CD4-positive, alpha-beta T cell (primary cell): ENCODE measurements at regions of chr17 and their contacts with region 1.

Region 1: GRCh38 chr17:3723556-3724369 is at the start of gene HASPIN:
- DNase-seq: peak; percentile 86 to 97 (median 90)
- ATAC-seq: peak; percentile 88
- H3K4me3 ChIP-seq: peak within 1 kb of the TSS; percentile 94
- H3K4me3 Mint-ChIP-seq: peak within 1 kb of the TSS; percentile 89
- H3K27ac ChIP-seq: peak within 1 kb of the TSS; percentile 57 to 64
- H3K27ac Mint-ChIP-seq: peak within 1 kb of the TSS; percentile 75
- H3K4me1 ChIP-seq: peaks cover 48% of the 10 kb centered on the region
- H3K4me1 Mint-ChIP-seq: peaks cover 39% of the 10 kb centered on the region
- H3K27me3 ChIP-seq: no peaks in the 10 kb centered on the region
- H3K27me3 Mint-ChIP-seq: no peaks in the 10 kb centered on the region
- CTCF ChIP-seq: no peak
- total RNA-seq, gene HASPIN: 0.22 to 0.25 TPM

Region 2: DNA sequence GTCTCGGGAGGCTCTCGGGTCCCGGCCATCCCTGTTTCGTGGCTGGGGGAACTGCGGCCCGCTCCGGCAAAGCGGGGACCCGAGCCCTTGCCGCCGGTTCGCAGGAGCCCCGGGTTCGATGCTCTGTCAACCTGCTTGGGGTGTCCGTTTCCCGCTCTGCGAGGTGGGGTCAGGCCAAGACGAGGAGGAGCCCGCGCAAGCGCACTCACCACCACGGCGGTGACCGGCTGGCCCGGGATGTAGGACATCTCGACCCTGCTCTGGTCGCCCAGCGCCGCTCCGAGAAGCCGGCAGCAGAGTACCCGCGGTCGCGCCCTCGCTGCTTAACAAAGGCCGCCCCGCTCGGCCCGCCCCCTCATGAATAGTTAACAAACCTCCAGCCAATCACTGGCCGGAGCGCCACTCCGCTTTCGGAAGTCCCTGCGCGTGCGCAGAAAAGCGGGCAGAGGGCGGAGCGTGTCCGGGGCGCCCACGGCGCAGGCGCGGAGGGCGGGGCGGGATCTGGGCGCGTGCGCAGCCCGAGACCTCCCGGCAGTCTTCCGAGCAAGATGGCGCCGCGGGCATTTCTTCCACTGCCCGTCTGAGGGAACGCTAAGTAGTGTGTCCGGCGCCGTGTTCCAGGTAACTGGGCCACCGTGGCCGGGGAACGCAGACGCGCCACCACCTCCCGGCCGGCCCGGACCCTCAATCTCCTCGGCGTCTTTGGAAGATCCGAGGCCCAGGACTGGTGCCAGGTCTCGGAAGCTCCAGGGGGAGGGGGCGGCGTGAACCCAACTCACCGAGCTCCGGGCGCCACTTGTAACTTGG is 55.3 kb before region 1 on chr17 and contains the starts of genes EMC6 and TAX1BP3:
- CTCF ChIA-PET with region 1: no interaction called
- POLR2A ChIA-PET with region 1: interaction called, 3 read pairs
- intact Hi-C with region 1: loop called in 1 of 2 experiments (anchors 2 kb)
- DNase-seq: peak; percentile 96 to 99 (median 99)
- ATAC-seq: peak; percentile 94
- H3K4me3 ChIP-seq: peak within 1 kb of the TSS; percentile 100
- H3K4me3 Mint-ChIP-seq: peak within 1 kb of the TSS; percentile 92
- H3K27ac ChIP-seq: peak within 1 kb of the TSS; percentile 67 to 78
- H3K27ac Mint-ChIP-seq: peak within 1 kb of the TSS; percentile 81
- H3K4me1 ChIP-seq: peaks cover 25% of the 10 kb centered on the region
- H3K4me1 Mint-ChIP-seq: peaks cover 13% of the 10 kb centered on the region
- H3K27me3 ChIP-seq: no peaks in the 10 kb centered on the region
- H3K27me3 Mint-ChIP-seq: no peaks in the 10 kb centered on the region
- CTCF ChIP-seq: no peak
- total RNA-seq, gene EMC6: 28.8 to 29.6 TPM
- total RNA-seq, gene TAX1BP3: 6.0 to 6.6 TPM

Region 3: DNA sequence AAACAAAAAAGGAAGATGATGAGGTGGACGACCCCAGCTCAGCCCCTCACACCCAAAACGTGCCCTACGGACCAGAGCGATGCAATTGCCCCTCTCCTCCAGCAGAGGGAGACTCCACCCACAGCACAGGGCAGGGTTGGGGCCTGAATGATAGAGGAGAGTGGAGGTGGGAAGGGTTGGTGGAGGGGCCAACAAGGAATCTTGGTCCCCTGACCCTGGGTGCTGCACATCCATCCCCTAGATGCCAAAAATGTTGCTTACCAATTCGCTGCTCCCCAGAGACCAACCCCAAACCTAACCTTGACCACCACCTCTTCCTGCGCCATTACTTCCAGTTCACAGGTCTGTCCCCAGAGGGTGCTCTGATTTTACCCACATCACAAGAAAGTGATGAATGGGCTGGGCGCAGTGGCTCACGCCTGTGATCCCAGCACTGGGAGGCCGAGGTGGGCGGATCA is 40.7 kb before region 1 on chr17:
- CTCF ChIA-PET with region 1: interaction called, 4 read pairs
- POLR2A ChIA-PET with region 1: interaction called, 3 read pairs
- intact Hi-C with region 1: loop called (anchors 1 to 5 kb)
- DNase-seq: peak; percentile 30 to 80 (median 50)
- ATAC-seq: peak; percentile 97
- H3K4me3 ChIP-seq: no peak overlapping the region
- H3K4me3 Mint-ChIP-seq: no peak overlapping the region
- H3K27ac ChIP-seq: no peak overlapping the region
- H3K27ac Mint-ChIP-seq: no peak overlapping the region
- H3K4me1 ChIP-seq: peaks cover 16% of the 10 kb centered on the region
- H3K4me1 Mint-ChIP-seq: peaks cover 7% of the 10 kb centered on the region
- H3K27me3 ChIP-seq: no peaks in the 10 kb centered on the region
- H3K27me3 Mint-ChIP-seq: no peaks in the 10 kb centered on the region
- CTCF ChIP-seq: peak; percentile 95

Region 4: GRCh38 chr17:3695723-3696411 is 27.9 kb before region 1 on chr17 and contains the start of gene P2RX5:
- CTCF ChIA-PET with region 1: interaction called, 4 read pairs
- POLR2A ChIA-PET with region 1: interaction called, 15 read pairs
- intact Hi-C with region 1: no loop called
- DNase-seq: peak in 11 of 14 experiments; percentile 15 to 65 (median 41)
- ATAC-seq: peak; percentile 73
- H3K4me3 ChIP-seq: peak within 1 kb of the TSS; percentile 86
- H3K4me3 Mint-ChIP-seq: peak within 1 kb of the TSS; percentile 98
- H3K27ac ChIP-seq: peak within 1 kb of the TSS in 1 of 2 donors; percentile 25
- H3K27ac Mint-ChIP-seq: peak within 1 kb of the TSS; percentile 72
- H3K4me1 ChIP-seq: peaks cover 31% of the 10 kb centered on the region
- H3K4me1 Mint-ChIP-seq: peaks cover 36% of the 10 kb centered on the region
- H3K27me3 ChIP-seq: no peaks in the 10 kb centered on the region
- H3K27me3 Mint-ChIP-seq: no peaks in the 10 kb centered on the region
- CTCF ChIP-seq: no peak
- total RNA-seq, gene P2RX5: 14.3 to 16.0 TPM

Region 5: DNA sequence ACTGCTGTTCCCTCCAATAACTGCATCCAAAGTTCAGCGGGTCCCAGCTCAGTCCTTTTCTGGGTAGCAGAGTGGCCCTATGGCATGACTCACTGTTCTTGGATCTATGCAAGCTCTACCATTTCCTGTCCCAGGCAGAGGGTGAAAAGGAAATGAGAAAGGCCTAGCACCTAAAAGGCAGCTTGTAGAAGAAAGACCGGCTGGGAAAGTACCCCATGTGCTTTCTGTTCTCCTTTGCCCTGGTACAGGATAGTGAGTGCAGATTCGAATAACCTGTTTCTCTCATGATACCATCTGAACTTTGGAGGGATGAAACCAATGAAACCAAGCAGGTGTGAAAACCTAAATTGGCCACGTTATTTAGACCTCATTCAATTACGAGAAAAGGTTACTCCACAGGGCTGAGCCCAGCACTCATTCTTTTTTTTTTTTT is 12.8 kb before region 1 on chr17:
- CTCF ChIA-PET with region 1: interaction called, 8 read pairs
- POLR2A ChIA-PET with region 1: interaction called, 35 read pairs
- intact Hi-C with region 1: loop called in 1 of 2 experiments (anchors 1 kb)
- DNase-seq: peak; percentile 32 to 95 (median 58)
- ATAC-seq: peak; percentile 93
- H3K4me3 ChIP-seq: peak overlapping the region; percentile 16
- H3K4me3 Mint-ChIP-seq: peak overlapping the region; percentile 68
- H3K27ac ChIP-seq: peak overlapping the region in 1 of 2 donors; percentile 52
- H3K27ac Mint-ChIP-seq: peak overlapping the region; percentile 83
- H3K4me1 ChIP-seq: peaks cover 35% of the 10 kb centered on the region
- H3K4me1 Mint-ChIP-seq: peaks cover 50% of the 10 kb centered on the region
- H3K27me3 ChIP-seq: no peaks in the 10 kb centered on the region
- H3K27me3 Mint-ChIP-seq: no peaks in the 10 kb centered on the region
- CTCF ChIP-seq: no peak